Calu3 (cell line): ENCODE measurements at regions of chr15 and their contacts with region 1.

Region 1: GRCh38 chr15:59528965-59529402 is 82.6 kb upstream of the GCNT3 start:
- DNase-seq: peak; percentile 94
- H3K4me3 Mint-ChIP-seq: no peak overlapping the region
- H3K27ac Mint-ChIP-seq: no peak overlapping the region
- H3K4me1 Mint-ChIP-seq: peaks cover 41% of the 10 kb centered on the region
- H3K27me3 Mint-ChIP-seq: no peaks in the 10 kb centered on the region
- CTCF ChIP-seq: peak; percentile 86

Region 2: GRCh38 chr15:59553879-59554735 is 25.1 kb after region 1 on chr15:
- CTCF ChIA-PET with region 1: interaction called, 13 read pairs
- intact Hi-C with region 1: no loop called
- DNase-seq: peak; percentile 66
- H3K4me3 Mint-ChIP-seq: no peak overlapping the region
- H3K27ac Mint-ChIP-seq: peak overlapping the region; percentile 56
- H3K4me1 Mint-ChIP-seq: peaks cover 50% of the 10 kb centered on the region
- H3K27me3 Mint-ChIP-seq: no peaks in the 10 kb centered on the region
- CTCF ChIP-seq: no peak

Region 3: GRCh38 chr15:59594493-59594942 is 65.5 kb after region 1 on chr15:
- CTCF ChIA-PET with region 1: interaction called, 19 read pairs
- intact Hi-C with region 1: no loop called
- DNase-seq: peak; percentile 61
- H3K4me3 Mint-ChIP-seq: peak overlapping the region; percentile 16
- H3K27ac Mint-ChIP-seq: peak overlapping the region; percentile 95
- H3K4me1 Mint-ChIP-seq: peaks cover 61% of the 10 kb centered on the region
- H3K27me3 Mint-ChIP-seq: no peaks in the 10 kb centered on the region
- CTCF ChIP-seq: no peak

Region 4: DNA sequence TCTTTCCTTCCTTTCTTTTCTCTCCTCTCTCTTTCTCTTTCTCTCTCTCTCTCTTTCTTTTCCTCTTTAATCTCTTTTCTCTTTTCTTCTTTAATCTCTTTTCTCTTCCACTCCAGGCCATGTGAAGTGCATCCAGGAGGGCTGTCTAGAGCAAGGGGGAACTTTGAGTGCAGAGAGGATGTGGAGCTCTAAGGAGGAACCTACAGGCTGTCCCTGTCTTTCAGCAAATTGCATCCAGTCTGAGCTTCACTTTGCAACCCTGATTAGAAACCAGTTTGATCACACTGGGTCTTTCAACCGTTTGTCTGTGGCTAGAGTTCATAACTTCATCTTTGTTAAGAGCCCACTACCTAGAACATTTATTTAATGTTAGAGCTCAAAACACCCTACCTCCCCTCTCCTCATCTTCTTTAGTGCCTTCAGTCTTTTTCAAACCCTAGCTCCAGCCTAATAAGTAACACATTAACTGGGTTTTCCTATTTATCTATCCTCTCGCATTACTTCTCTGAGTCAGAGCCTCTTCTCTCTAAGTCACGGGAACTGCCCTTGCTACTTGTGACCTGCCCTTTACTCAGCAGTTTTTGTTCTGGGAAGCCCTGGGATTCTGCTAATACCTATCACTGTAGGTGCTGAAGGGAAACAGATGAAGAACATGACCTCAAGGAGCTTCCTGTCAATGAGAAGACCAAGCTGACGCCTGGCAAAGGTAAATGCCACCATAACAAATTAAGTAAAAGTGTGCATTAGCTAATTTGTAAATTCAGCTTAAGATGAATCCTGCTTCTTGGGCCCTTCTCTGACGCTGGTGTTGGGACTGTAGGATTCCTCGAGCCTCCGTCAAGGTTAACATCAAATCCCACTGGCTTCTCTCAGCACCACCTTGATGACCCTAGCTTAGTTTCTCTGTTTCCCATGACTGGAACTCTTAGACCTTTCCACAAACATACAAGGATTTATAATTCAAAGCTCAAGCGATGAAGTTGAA is 82.6 kb after region 1 on chr15 and contains the start of gene GCNT3:
- CTCF ChIA-PET with region 1: interaction called, 81 read pairs
- intact Hi-C with region 1: loop called (anchors 1 kb)
- DNase-seq: peak; percentile 65
- H3K4me3 Mint-ChIP-seq: peak within 1 kb of the TSS; percentile 60
- H3K27ac Mint-ChIP-seq: peak within 1 kb of the TSS; percentile 98
- H3K4me1 Mint-ChIP-seq: peaks cover 61% of the 10 kb centered on the region
- H3K27me3 Mint-ChIP-seq: peaks cover 7% of the 10 kb centered on the region
- CTCF ChIP-seq: no peak
- total RNA-seq, gene GCNT3: 11.6 and 15.4 TPM in 2 replicates

Region 5: DNA sequence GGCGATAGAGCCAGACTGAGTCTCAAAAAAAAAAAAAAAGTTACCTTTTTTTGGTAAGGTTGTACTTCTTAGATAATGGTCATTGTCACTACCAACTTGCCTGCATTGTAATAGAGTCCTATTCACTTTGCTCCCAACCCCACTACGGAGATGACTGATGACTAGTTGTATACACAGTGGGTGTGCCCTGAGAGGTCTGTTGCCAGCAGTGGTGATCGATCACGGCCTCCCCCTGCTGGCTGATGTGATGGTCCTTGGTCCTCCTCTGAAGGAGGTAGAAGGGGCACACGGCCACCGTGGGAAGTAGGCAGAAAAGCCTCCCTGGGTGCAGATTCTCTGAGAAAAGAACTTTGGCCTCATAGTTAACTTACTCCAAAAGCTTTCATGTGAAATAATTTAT is 93.3 kb after region 1 on chr15:
- CTCF ChIA-PET with region 1: interaction called, 81 read pairs
- intact Hi-C with region 1: loop called (anchors 1 kb)
- DNase-seq: peak; percentile 92
- H3K4me3 Mint-ChIP-seq: no peak overlapping the region
- H3K27ac Mint-ChIP-seq: no peak overlapping the region
- H3K4me1 Mint-ChIP-seq: peaks cover 2% of the 10 kb centered on the region
- H3K27me3 Mint-ChIP-seq: no peaks in the 10 kb centered on the region
- CTCF ChIP-seq: peak; percentile 83

Region 6: DNA sequence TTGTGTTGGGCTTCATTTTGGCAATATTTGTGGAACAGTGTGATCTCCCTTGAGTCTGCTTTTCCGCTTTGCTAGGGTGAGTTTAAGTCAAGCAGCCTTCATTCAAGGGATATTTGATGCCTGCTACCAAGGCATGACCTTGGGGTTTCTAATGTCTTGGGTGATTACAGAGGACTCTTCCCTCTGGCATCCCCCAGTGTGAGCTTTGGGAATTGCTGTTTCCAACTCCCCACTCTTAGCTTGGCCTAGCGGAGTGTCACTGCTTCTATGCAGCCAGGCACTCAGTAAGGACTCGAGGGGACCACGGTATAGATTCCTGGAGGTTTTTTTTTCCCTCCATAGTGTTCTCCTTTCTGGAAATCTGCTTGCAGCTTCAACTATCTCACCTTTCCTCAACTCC is 103.7 kb after region 1 on chr15:
- CTCF ChIA-PET with region 1: interaction called, 12 read pairs
- intact Hi-C with region 1: loop called (anchors 5 kb)
- DNase-seq: peak; percentile 36
- H3K4me3 Mint-ChIP-seq: no peak overlapping the region
- H3K27ac Mint-ChIP-seq: no peak overlapping the region
- H3K4me1 Mint-ChIP-seq: no peaks in the 10 kb centered on the region
- H3K27me3 Mint-ChIP-seq: no peaks in the 10 kb centered on the region
- CTCF ChIP-seq: peak; percentile 33